ENCODE measurements at regions of chr9 and their contacts with region 1.

Region 1: GRCh38 chr9:23826120-23826629 is at the start of gene ELAVL2:
- DNase-seq: peak; percentile 54
- ATAC-seq: peak; percentile 78
- H3K4me3 Mint-ChIP-seq: no peak within 1 kb of the TSS
- H3K27ac Mint-ChIP-seq: no peak within 1 kb of the TSS
- H3K4me1 Mint-ChIP-seq: peaks cover under 1% of the 10 kb centered on the region
- H3K27me3 Mint-ChIP-seq: peaks cover 33% of the 10 kb centered on the region
- total RNA-seq, gene ELAVL2: not detected

Region 2: GRCh38 chr9:21965401-21965951 is 1860.7 kb before region 1 on chr9:
- CTCF ChIA-PET with region 1: no interaction called
- POLR2A ChIA-PET with region 1: no interaction called
- intact Hi-C with region 1: loop called in 1 of 2 experiments (anchors 5 kb)
- DNase-seq: peak; percentile 75
- ATAC-seq: peak; percentile 84
- H3K4me3 Mint-ChIP-seq: peak overlapping the region; percentile 53
- H3K27ac Mint-ChIP-seq: peak overlapping the region; percentile 5
- H3K4me1 Mint-ChIP-seq: peaks cover 24% of the 10 kb centered on the region
- H3K27me3 Mint-ChIP-seq: peaks cover 85% of the 10 kb centered on the region

Region 3: GRCh38 chr9:25752398-25752797 is 1926.2 kb after region 1 on chr9:
- CTCF ChIA-PET with region 1: no interaction called
- POLR2A ChIA-PET with region 1: no interaction called
- intact Hi-C with region 1: no loop called
- DNase-seq: no peak
- ATAC-seq: no peak
- H3K4me3 Mint-ChIP-seq: no peak overlapping the region
- H3K27ac Mint-ChIP-seq: no peak overlapping the region
- H3K4me1 Mint-ChIP-seq: no peaks in the 10 kb centered on the region
- H3K27me3 Mint-ChIP-seq: no peaks in the 10 kb centered on the region

Measured in activated CD4-positive, alpha-beta T cell treated with anti-CD3 and anti-CD28 coated beads for 36 hours (primary cell).